ENCODE measurements at regions of chr11 and their contacts with region 1.

Region 1: DNA sequence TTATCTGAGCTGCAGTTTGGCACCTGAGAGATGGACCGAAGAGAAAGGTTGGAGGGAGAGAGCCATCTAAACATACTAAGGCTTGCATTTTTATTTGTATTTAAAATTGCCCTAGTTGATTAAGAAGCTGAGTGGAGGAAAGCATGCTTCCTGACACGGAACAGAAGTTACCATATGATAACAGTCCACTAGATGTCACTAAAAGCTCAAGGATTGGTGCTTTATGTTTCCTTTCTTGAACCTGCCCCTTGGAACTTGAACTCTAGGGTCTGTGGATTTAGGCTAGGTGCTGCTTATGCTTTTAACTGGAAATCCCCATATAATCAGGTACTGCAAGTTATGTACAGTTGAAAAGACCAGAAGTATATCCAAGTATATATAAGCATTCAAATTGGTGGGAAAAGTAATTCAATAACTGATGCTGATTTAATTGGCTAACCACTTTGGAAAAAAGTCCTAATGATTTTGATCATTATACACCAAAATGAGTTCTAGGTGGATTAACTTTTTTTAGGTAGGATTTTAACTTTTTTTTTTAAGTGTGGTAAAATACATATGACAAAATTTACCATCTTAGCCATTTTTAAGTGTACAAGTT is 9.5 kb downstream of the RBMXL2 start:
- DNase-seq: no peak
- ATAC-seq: peak; percentile 64 to 67
- H3K4me3 ChIP-seq: no peak overlapping the region
- H3K27ac ChIP-seq: no peak overlapping the region
- H3K4me1 ChIP-seq: no peaks in the 10 kb centered on the region
- H3K27me3 ChIP-seq: no peaks in the 10 kb centered on the region

Region 2: DNA sequence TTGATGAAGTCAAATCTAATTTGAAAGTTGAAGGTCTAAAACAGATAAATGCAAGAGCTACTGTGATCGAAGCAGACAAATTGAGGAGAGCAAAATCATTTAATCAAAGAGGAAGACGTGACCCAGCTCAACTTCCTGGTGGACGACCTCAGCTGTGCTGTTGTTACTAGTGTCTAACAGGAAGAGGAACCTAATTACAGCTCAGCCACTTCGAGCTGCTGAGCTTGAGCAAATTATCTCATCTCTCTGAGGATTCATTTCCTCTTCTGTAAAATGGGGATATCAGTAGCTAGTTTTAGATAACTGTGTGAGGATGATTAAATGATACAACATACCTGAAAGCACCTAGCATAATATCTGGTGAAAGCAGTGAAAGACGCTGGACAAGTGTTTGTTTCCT is 338.3 kb after region 1 on chr11:
- intact Hi-C with region 1: loop called in 2 of 4 experiments (anchors 5 kb)
- DNase-seq: no peak
- ATAC-seq: peak; percentile 43 to 61
- H3K4me3 ChIP-seq: no peak overlapping the region
- H3K27ac ChIP-seq: no peak overlapping the region
- H3K4me1 ChIP-seq: no peaks in the 10 kb centered on the region
- H3K27me3 ChIP-seq: no peaks in the 10 kb centered on the region

Region 3: GRCh38 chr11:7442588-7443215 is 344.4 kb after region 1 on chr11:
- intact Hi-C with region 1: loop called in 2 of 4 experiments (anchors 5 kb)
- DNase-seq: peak; percentile 65 to 90 (median 81)
- ATAC-seq: peak; percentile 58 to 71
- H3K4me3 ChIP-seq: no peak overlapping the region
- H3K27ac ChIP-seq: no peak overlapping the region
- H3K4me1 ChIP-seq: no peaks in the 10 kb centered on the region
- H3K27me3 ChIP-seq: no peaks in the 10 kb centered on the region

Region 4: DNA sequence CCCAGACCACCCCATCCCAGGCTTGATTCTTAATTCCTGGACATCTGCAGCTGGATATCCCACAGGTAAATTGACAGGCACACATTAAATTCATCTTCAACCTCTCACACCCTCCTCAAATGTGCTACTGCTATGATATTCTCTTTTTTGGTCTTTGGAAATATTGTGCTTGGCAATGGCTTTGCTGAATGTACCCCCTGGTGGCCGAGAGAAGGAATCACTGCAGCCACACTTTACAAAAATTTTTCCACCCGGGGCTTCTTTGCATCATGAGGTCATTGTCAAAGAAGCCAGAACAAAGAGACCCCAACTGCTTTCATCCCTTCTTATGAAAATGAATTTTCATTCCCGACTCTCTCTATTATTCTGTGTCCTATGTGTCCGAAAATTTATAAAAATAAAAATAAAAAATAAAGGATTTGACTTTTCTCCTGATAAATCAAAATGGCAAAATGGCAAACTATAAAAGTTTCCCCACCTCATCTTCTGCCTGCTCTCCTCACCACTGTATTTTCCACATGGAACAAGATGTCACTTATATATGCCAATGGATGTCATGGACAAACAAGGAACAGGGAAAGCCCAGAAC is 590.0 kb after region 1 on chr11:
- intact Hi-C with region 1: loop called in 3 of 4 experiments (anchors 10 kb)
- DNase-seq: no peak
- ATAC-seq: peak in 1 of 2 donors; percentile 50
- H3K4me3 ChIP-seq: no peak overlapping the region
- H3K27ac ChIP-seq: no peak overlapping the region
- H3K4me1 ChIP-seq: no peaks in the 10 kb centered on the region
- H3K27me3 ChIP-seq: peaks cover 2% of the 10 kb centered on the region